K562 (cell line): ENCODE measurements at regions of chr7 and their contacts with region 1.

Region 1: DNA sequence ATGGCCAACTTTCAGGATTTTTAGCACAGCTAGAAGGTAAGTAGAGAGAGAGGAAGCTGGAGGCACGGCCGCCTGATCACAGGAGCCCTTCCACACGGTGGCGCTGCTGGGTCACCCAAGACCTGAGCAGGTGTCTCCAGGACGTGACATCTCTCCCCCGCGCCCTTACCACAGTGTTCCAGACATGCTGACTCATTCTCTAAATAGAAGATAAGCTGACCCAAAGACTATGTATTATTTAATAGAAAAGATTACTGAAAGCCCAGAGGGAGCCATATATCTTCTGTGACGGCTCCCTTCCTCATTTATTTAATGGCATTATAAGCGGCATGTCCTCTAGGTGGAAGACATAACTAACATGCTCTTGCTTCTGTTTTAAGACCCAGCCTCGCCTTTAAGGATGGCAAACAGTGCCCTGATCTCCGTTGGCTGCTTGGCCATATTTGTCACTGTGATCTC is 26.0 kb upstream of the MALSU1 start:
- DNase-seq: peak; percentile 85 to 98 (median 90)
- ATAC-seq: peak; percentile 96
- H3K4me3 ChIP-seq: no peak overlapping the region
- H3K27ac ChIP-seq: peak overlapping the region; percentile 38; the same call in 1 of the 3 replicates
- H3K4me1 ChIP-seq: peaks cover 0 to 7% of the 10 kb centered on the region in 2 experiments; a peak in 3 of 5 replicates
- H3K27me3 ChIP-seq: peaks cover 0 to 10% of the 10 kb centered on the region in 2 experiments; a peak in 1 of 5 replicates
- CTCF ChIP-seq: peak; percentile 85 to 93 (median 93)
- EP300 ChIP-seq: peak; percentile 68; the same call in 1 of the 2 replicates
- POLR2A ChIP-seq: no peak
- RAD21 ChIP-seq: peak; percentile 79 to 89

Region 2: DNA sequence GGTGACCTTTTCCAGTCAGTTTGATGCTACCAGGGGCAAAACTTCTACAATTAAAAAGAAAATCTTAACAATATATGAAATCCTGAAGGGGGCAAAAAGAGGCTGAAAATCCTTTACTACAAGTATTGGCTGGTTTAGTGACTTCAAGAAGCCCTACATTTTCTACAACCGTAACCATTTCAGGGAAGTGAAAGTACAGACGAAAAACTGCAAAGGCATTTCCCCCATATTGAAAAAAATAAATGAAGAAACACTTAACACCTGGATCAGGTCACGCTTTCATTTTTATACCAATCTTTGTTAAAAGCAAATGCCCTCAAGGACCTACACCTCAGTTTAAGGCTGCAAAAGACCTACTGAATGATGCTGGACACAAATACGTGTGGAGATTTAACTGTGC is 507.6 kb before region 1 on chr7:
- CTCF ChIA-PET with region 1: no interaction called
- POLR2A ChIA-PET with region 1: no interaction called
- in situ Hi-C with region 1: no loop called
- intact Hi-C with region 1: no loop called
- DNase-seq: no peak
- ATAC-seq: no peak
- H3K4me3 ChIP-seq: no peak overlapping the region
- H3K27ac ChIP-seq: no peak overlapping the region
- H3K4me1 ChIP-seq: no peaks in the 10 kb centered on the region
- H3K27me3 ChIP-seq: no peaks in the 10 kb centered on the region
- CTCF ChIP-seq: no peak
- EP300 ChIP-seq: no peak
- POLR2A ChIP-seq: no peak
- RAD21 ChIP-seq: no peak

Region 3: DNA sequence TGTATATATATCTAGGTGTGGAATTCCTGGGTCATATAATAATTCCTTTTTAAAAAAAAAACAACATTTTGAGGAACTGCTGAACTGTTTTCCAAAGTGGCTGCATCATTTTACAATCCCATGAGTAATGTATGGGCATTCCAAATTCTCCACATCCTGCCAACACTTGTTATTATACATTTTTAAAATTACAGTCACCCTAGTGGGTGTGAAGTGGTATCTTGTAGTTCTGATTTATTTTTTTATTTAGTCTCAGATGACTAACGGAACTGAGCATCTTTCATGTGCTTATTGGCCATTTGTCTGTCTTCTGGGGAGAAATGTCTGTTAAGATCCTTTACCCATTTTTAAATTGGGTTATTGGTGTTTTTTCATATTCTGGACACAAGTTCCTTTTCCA is 179.6 kb before region 1 on chr7:
- CTCF ChIA-PET with region 1: no interaction called
- POLR2A ChIA-PET with region 1: no interaction called
- in situ Hi-C with region 1: no loop called
- intact Hi-C with region 1: loop called (anchors 5 kb)
- DNase-seq: no peak
- ATAC-seq: no peak
- H3K4me3 ChIP-seq: no peak overlapping the region
- H3K27ac ChIP-seq: no peak overlapping the region
- H3K4me1 ChIP-seq: peaks cover 0 to 3% of the 10 kb centered on the region in 2 experiments; a peak in 1 of 5 replicates
- H3K27me3 ChIP-seq: no peaks in the 10 kb centered on the region
- CTCF ChIP-seq: no peak
- EP300 ChIP-seq: no peak
- POLR2A ChIP-seq: no peak
- RAD21 ChIP-seq: no peak

Region 4: GRCh38 chr7:23216021-23216420 is 57.1 kb before region 1 on chr7:
- CTCF ChIA-PET with region 1: no interaction called
- POLR2A ChIA-PET with region 1: no interaction called
- in situ Hi-C with region 1: no loop called
- intact Hi-C with region 1: no loop called
- DNase-seq: no peak
- ATAC-seq: peak; percentile 19; the same call in 1 of the 3 replicates
- H3K4me3 ChIP-seq: no peak overlapping the region
- H3K27ac ChIP-seq: no peak overlapping the region
- H3K4me1 ChIP-seq: peaks cover 0 to 4% of the 10 kb centered on the region in 2 experiments; a peak in 3 of 5 replicates
- H3K27me3 ChIP-seq: no peaks in the 10 kb centered on the region
- CTCF ChIP-seq: no peak
- EP300 ChIP-seq: no peak
- POLR2A ChIP-seq: no peak
- RAD21 ChIP-seq: no peak

Region 5: GRCh38 chr7:23261843-23262452 is 11.2 kb before region 1 on chr7:
- CTCF ChIA-PET with region 1: no interaction called
- POLR2A ChIA-PET with region 1: interaction called, 4 read pairs
- in situ Hi-C with region 1: no loop called
- intact Hi-C with region 1: loop called (anchors 1 kb)
- DNase-seq: peak; percentile 82 to 86 (median 84)
- ATAC-seq: peak; percentile 99
- H3K4me3 ChIP-seq: no peak overlapping the region
- H3K27ac ChIP-seq: no peak overlapping the region
- H3K4me1 ChIP-seq: peaks cover 0 to under 1% of the 10 kb centered on the region in 2 experiments; a peak in 2 of 5 replicates
- H3K27me3 ChIP-seq: no peaks in the 10 kb centered on the region
- CTCF ChIP-seq: peak; percentile 88 to 92 (median 91)
- EP300 ChIP-seq: no peak
- POLR2A ChIP-seq: no peak
- RAD21 ChIP-seq: peak; percentile 74 to 78

Region 6: GRCh38 chr7:23431702-23432199 is 158.6 kb after region 1 on chr7:
- CTCF ChIA-PET with region 1: no interaction called
- POLR2A ChIA-PET with region 1: no interaction called
- in situ Hi-C with region 1: no loop called
- intact Hi-C with region 1: loop called (anchors 5 kb)
- DNase-seq: peak; percentile 41 to 56 (median 52)
- ATAC-seq: peak; percentile 62
- H3K4me3 ChIP-seq: no peak overlapping the region
- H3K27ac ChIP-seq: peak overlapping the region; percentile 41; the same call in 1 of the 3 replicates
- H3K4me1 ChIP-seq: peaks cover 11 to 48% of the 10 kb centered on the region in 2 experiments; a peak in 4 of 5 replicates
- H3K27me3 ChIP-seq: no peaks in the 10 kb centered on the region
- CTCF ChIP-seq: no peak
- EP300 ChIP-seq: peak; percentile 16; the same call in 1 of the 2 replicates
- POLR2A ChIP-seq: no peak
- RAD21 ChIP-seq: no peak

Region 7: GRCh38 chr7:23712368-23713284 is 439.5 kb after region 1 on chr7:
- CTCF ChIA-PET with region 1: interaction called, 6 read pairs
- POLR2A ChIA-PET with region 1: no interaction called
- in situ Hi-C with region 1: loop called (anchors 25 kb)
- intact Hi-C with region 1: loop called (anchors 2 kb)
- DNase-seq: peak; percentile 44 to 62 (median 52)
- ATAC-seq: peak; percentile 58; the same call in 2 of the 3 replicates
- H3K4me3 ChIP-seq: no peak overlapping the region
- H3K27ac ChIP-seq: no peak overlapping the region
- H3K4me1 ChIP-seq: no peaks in the 10 kb centered on the region
- H3K27me3 ChIP-seq: peaks cover 0 to 6% of the 10 kb centered on the region in 2 experiments; a peak in 2 of 5 replicates
- CTCF ChIP-seq: peak; percentile 42 to 82 (median 58); a peak in 4 of 6 replicates
- EP300 ChIP-seq: no peak
- POLR2A ChIP-seq: no peak
- RAD21 ChIP-seq: peak; percentile 92 to 94